ENCODE measurements at regions of chr1 and their contacts with region 1.

Region 1: GRCh38 chr1:60126723-60127122 is 53.2 kb upstream of the C1orf87 start:
- DNase-seq: no peak
- H3K4me3 ChIP-seq: no peak overlapping the region
- H3K27ac ChIP-seq: no peak overlapping the region
- H3K4me1 ChIP-seq: no peaks in the 10 kb centered on the region
- H3K27me3 ChIP-seq: peaks cover 0 to 1% (median 0%) of the 10 kb centered on the region in 4 experiments; a peak in 1 of 7 replicates
- CTCF ChIP-seq: peak in 2 of 3 experiments; percentile 48 to 57; a peak in 3 of 4 replicates
- EP300 ChIP-seq: no peak
- POLR2A ChIP-seq: no peak
- RAD21 ChIP-seq: peak; percentile 62 to 72

Region 2: GRCh38 chr1:59978026-59978425 is 148.7 kb before region 1 on chr1:
- CTCF ChIA-PET with region 1: interaction called, 43 read pairs
- POLR2A ChIA-PET with region 1: no interaction called
- DNase-seq: no peak
- H3K4me3 ChIP-seq: no peak overlapping the region
- H3K27ac ChIP-seq: no peak overlapping the region
- H3K4me1 ChIP-seq: no peaks in the 10 kb centered on the region
- H3K27me3 ChIP-seq: no peaks in the 10 kb centered on the region; a peak in 1 of 7 replicates
- CTCF ChIP-seq: no peak
- EP300 ChIP-seq: no peak
- POLR2A ChIP-seq: no peak
- RAD21 ChIP-seq: no peak

Region 3: DNA sequence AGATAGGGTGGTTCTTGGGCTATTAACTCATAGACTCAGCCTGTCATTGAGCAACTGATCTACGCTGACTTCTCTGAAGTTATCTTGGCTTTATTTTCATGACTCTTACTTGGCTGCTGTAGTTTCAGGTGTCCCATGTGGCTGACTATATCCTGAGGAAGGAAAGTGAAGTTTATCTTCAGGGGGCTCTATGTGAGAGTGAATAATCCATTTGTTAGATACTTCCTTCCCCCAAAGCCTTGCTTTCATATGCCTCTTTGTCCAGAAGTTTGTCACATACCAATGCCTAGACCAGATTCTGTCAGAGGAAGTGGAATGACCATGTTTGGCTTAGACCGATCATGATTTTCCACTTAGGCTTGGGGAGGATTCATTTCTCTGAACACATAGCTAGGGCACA is 25.2 kb before region 1 on chr1:
- CTCF ChIA-PET with region 1: no interaction called
- POLR2A ChIA-PET with region 1: no interaction called
- DNase-seq: no peak
- H3K4me3 ChIP-seq: no peak overlapping the region
- H3K27ac ChIP-seq: no peak overlapping the region
- H3K4me1 ChIP-seq: no peaks in the 10 kb centered on the region
- H3K27me3 ChIP-seq: no peaks in the 10 kb centered on the region
- CTCF ChIP-seq: no peak
- EP300 ChIP-seq: no peak
- POLR2A ChIP-seq: no peak
- RAD21 ChIP-seq: no peak